Endothelial cell of umbilical vein (primary cell): ENCODE measurements at regions of chr12 and their contacts with region 1.

Region 1: DNA sequence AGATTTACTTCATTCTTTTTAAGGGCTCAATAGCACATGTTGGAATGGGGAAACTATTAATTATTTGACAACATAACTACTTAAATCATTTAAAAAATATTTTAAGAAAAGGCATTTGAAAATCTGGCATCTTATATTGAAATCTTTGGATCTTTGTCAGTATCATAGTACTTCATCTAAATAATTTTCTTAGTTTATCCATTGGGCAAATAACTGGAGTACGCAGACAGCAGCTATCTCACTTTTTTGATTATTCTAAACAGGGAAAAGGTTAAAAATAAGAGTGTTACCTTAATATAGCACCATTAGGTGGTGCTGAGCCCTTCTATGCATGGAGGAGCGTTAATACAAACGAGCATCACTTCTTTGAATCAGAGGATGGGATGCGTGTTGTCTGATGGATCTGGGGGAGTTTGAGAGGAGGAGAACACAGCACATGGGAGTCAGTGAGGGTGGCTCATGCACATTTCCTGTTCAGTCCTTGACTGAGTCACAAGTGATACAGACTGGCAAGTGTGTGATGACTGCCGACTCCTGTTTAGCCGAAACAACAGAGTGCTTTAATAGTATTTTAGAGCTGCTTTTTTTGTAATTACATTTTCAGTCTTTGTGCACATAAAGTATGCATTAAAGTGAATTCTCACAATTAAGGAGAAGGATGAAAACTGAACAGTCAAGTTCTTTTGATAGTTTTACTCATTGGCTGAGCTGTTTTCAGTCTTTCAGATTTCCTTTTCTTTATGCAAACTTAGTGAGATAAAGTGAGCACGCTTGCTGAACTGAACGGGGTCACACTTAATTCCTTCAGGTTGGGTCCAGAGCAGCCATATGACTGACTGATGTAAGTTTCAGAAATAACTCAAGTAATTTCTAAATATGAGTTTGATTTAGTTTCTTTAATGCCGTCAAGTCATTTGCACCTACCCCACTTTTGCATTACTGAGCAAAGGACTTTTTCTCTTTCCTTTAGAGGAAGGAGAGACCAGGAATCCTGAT is 92.7 kb downstream of the DIP2B start:
- DNase-seq: peak; percentile 80
- H3K4me3 ChIP-seq: peak overlapping the region in 1 of 3 experiments; percentile 13
- H3K27ac ChIP-seq: peak overlapping the region; percentile 34
- H3K4me1 ChIP-seq: peaks cover 33% of the 10 kb centered on the region
- H3K27me3 ChIP-seq: no peaks in the 10 kb centered on the region
- CTCF ChIP-seq: no peak
- POLR2A ChIP-seq: no peak

Region 2: DNA sequence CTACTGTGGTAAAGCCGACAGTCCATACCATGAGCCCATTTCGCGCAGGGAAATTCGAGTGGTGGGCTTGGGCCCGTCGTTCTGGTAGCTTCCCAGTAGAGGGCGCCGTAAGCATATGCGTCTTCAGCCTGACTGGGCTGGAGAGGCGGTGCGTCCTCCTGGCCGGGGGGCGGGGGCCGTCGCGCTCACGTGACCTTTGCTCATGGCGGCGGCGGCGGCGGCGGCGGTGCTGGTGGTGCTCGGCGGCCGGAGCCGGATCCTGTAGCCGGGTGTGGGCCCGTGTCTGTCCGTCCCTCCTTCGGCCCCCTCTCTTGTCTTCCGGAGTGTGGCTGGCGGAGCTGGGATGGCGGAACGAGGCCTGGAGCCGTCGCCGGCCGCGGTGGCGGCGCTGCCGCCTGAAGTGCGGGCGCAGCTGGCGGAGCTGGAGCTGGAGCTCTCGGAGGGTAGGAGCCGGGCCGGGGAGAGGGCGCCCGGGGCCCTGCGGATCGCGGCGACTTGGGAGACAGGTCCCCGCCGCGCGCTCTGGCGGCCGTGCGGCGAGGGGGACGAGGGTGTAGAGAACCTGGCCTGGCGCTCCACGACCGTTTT is 92.6 kb before region 1 on chr12 and contains the start of gene DIP2B:
- CTCF ChIA-PET with region 1: interaction called, 4 read pairs
- POLR2A ChIA-PET with region 1: no interaction called
- dilution Hi-C with region 1: no loop called
- intact Hi-C with region 1: loop called (anchors 5 kb)
- DNase-seq: peak; percentile 90
- H3K4me3 ChIP-seq: peak within 1 kb of the TSS; percentile 84 to 97 (median 94)
- H3K27ac ChIP-seq: peak within 1 kb of the TSS; percentile 65
- H3K4me1 ChIP-seq: peaks cover 11% of the 10 kb centered on the region
- H3K27me3 ChIP-seq: no peaks in the 10 kb centered on the region
- CTCF ChIP-seq: peak; percentile 75 to 90
- POLR2A ChIP-seq: peak; percentile 59
- total RNA-seq, gene DIP2B: 27.7 and 28.0 TPM in 2 replicates

Region 3: DNA sequence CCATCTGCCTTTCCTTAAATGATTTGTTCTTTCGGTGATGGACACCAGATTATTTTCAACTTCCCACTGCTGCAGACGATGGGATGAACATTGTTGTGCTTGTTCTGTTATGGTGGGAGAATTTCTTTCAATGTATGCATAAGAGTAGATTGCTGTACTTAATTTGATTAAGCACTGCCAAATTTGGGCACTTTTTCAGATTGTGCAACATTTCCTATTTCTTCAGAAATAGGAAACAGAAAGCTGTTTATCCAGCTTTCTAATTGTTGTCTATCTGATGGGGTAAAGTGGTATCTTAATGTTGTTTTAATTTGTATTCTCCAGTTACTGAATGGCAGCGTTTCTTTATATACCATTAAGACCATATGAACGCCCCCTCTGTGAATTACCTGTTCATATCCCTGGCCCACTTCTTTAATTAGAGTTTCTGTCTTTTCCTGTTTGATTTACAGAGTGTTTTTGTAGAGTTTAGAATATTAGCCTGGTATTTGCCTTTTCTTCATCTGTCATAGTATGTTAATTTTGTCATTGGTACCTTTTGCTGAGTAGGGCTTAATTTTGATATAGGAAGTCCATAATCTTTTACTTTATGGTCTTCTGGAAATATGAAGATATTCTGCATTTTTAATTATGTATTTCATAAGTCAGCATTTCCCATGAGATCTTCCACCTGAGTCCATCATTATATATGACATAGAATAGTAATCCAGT is 33.1 kb before region 1 on chr12:
- CTCF ChIA-PET with region 1: interaction called, 8 read pairs
- POLR2A ChIA-PET with region 1: no interaction called
- dilution Hi-C with region 1: no loop called
- intact Hi-C with region 1: loop called (anchors 1 kb)
- DNase-seq: peak; percentile 35
- H3K4me3 ChIP-seq: no peak overlapping the region
- H3K27ac ChIP-seq: peak overlapping the region; percentile 12
- H3K4me1 ChIP-seq: peaks cover 40% of the 10 kb centered on the region
- H3K27me3 ChIP-seq: no peaks in the 10 kb centered on the region
- CTCF ChIP-seq: no peak
- POLR2A ChIP-seq: no peak

Region 4: DNA sequence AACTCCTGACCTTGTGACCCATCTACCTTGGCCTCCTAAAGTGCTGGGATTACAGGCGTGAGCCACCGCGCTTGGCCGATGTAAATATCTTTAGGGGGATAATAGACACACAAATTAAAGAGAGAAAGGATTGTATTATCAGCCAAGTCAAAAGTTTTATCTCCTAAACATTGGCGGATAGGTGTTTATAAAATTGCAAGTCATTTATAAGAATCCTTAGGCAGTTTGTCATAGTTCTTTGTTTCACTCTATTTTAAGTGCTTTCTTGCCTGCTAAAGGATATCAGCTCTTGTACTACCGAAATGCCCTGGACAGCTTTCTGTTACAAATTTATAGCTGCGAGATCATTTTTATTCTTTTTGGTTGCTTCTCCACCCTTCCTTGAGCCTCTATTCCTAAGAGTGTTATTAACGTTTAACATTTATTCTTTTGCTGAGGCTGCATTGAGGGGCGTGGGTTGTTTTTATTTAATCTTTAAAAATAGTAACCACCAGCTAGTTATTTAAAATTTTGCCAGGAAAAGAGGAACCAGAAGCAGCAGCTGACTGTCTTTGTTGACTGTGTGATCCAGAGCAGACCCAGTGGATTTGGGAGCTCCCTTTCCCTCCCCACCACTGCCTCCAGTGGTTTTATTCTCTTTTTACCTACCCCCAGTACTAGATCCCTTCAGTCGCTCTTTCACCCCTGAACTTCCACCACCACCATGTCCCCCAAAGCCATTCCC is 13.7 kb after region 1 on chr12:
- CTCF ChIA-PET with region 1: interaction called, 11 read pairs
- POLR2A ChIA-PET with region 1: no interaction called
- dilution Hi-C with region 1: no loop called
- intact Hi-C with region 1: no loop called
- DNase-seq: no peak
- H3K4me3 ChIP-seq: no peak overlapping the region
- H3K27ac ChIP-seq: no peak overlapping the region
- H3K4me1 ChIP-seq: peaks cover 17% of the 10 kb centered on the region
- H3K27me3 ChIP-seq: no peaks in the 10 kb centered on the region
- CTCF ChIP-seq: no peak
- POLR2A ChIP-seq: no peak

Region 5: DNA sequence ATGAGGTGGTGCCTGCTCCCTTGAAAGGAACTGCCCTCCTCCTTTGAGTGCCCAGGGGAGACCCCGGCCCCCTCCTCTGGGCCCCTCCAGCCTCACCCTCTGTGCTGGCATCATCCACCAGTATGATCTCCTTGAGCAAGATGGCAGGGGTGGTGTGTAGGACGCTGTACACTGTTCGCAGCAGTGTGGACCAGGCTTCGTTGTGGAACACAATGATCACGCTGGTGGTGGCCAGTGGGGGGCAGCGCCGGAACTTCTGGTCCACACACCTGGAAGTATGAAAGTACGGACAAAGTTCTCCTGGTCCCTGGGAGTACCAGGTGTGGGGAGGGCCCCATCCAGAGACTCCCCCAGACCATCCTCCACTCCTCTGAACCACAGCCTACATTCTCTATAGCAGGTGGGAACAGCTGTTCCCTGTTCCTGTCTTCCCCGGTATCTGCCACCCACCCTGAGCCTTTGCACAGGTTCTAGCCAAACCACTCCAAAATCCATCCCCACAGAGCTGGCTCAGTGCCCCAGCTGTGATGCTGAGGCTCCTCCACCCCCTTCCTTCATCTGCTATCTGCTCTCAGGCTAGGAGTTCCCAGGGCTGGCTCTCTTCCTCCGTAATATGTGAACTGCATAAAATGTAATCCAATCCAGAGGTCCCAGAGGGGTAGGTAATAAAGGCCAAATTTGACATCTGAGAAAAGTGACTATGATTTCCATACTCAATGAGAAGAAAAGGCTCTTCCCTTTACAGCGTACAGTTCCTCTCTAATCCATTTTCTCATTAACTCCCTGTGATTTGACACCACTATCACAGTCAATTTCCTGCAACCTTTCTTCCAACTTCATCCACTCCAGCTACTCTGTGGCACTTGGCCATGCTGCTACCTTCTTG is 779.8 kb after region 1 on chr12:
- CTCF ChIA-PET with region 1: no interaction called
- POLR2A ChIA-PET with region 1: no interaction called
- dilution Hi-C with region 1: no loop called
- intact Hi-C with region 1: no loop called
- DNase-seq: no peak
- H3K4me3 ChIP-seq: no peak overlapping the region
- H3K27ac ChIP-seq: no peak overlapping the region
- H3K4me1 ChIP-seq: peaks cover 22% of the 10 kb centered on the region
- H3K27me3 ChIP-seq: no peaks in the 10 kb centered on the region
- CTCF ChIP-seq: peak in 1 of 2 donors; percentile 6
- POLR2A ChIP-seq: no peak